ENCODE measurements at regions of chr1 and their contacts with region 1.

Region 1: DNA sequence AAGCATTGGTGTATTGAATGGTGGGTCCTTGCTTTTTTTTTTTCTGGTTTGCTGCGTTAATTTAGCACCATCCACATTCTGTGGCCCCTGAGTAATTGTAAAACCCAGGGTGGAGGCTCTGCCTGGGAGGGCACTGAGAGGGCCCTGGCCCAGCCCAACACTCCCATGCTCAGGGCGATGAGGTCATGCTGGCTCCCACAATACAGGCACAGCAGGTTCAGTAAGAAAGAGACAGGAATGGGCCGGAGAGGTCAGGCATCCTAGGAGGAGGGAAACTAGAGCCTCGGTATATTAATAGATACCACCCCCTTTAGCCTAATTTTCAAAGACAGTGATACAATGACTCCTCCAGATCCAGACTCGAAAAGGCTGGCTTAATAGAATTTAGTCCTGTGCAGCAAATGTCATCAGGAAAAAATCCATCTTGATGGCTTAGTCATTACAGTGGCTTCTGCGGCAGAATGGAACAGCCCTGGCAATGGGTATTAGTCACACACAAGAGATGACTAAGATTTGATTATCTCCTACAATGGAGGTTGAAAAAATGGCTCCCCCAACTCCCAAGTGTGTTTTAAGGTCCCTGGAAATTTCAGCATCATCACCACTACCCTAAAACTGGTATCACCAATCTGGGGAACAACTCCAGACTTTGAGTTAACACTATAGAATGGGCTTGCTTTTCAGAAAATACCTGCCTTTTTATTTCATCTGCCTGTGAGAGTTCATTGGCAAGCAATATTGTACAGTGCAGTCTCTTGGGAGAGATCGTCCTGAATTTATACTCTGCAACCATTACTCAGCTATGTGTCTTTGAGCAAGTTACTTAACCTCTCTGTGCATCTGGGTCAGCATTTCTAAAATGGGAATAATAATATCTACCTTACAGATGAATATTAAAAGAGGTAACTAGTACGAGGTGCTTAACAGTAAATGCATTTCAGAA is 43.9 kb upstream of the LYST start:
- DNase-seq: no peak
- H3K4me3 Mint-ChIP-seq: no peak overlapping the region
- H3K27ac Mint-ChIP-seq: peak overlapping the region; percentile 86
- H3K4me1 Mint-ChIP-seq: peaks cover 38% of the 10 kb centered on the region
- H3K27me3 Mint-ChIP-seq: peaks cover 8% of the 10 kb centered on the region

Region 2: GRCh38 chr1:235873045-235873444 is 37.6 kb before region 1 on chr1:
- intact Hi-C with region 1: loop called (anchors 1 kb)
- DNase-seq: no peak
- H3K4me3 Mint-ChIP-seq: peak overlapping the region; percentile 70
- H3K27ac Mint-ChIP-seq: peak overlapping the region; percentile 98
- H3K4me1 Mint-ChIP-seq: peaks cover 61% of the 10 kb centered on the region
- H3K27me3 Mint-ChIP-seq: no peaks in the 10 kb centered on the region

Region 3: DNA sequence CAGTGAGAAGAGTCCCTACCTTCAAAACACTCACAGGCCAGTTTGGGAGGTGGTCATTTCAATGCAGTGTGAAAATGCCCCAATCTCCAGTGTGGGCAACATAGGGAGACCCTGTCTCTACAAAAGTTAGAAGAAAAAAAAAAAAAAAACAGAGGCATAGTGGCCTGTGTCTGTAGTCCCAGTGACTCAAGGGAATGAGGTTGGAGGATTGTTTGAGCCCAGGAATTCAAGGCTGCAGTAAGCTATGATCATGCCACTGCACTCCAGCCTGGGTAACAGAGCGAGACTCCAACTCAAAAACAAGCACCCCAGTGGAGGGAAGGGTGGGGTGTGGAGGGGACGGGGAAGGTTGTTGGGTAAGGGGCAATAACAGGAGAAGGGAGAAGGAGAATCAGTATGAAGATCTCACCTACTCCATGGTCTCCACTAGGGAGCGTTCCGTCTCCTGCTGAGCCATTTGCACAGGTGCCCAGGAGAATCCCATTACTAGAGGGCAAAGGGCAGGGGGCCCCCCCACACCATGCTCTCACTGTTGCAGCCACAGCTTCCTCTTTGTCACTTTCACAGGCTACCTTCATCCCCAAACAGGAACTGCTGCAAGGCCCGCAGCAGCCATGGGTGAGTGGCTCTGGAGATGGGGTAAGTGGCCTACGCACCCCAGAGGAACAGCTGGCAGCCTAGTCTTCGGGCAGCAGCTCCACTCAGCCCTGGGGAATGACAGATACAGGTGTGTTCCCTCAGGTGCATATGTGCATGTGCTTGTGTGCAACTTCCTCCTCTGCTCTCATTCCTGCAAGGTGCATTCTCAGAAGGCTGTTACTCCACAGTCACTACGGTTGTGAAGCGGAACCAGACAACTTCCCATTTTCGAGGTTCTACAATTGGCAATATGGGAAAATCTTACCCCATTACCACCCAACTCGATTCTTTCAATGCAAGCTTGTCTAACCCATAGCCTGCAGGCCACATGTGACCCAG is 44.0 kb after region 1 on chr1:
- intact Hi-C with region 1: loop called (anchors 1 kb)
- DNase-seq: peak; percentile 15
- H3K4me3 Mint-ChIP-seq: no peak overlapping the region
- H3K27ac Mint-ChIP-seq: no peak overlapping the region
- H3K4me1 Mint-ChIP-seq: peaks cover 33% of the 10 kb centered on the region
- H3K27me3 Mint-ChIP-seq: no peaks in the 10 kb centered on the region